ENCODE measurements at regions of chr1 and their contacts with region 1.

Region 1: GRCh38 chr1:157369808-157370521 is 182.3 kb downstream of the FCRL5 start:
- DNase-seq: peak; percentile 80
- H3K4me3 Mint-ChIP-seq: no peak overlapping the region
- H3K27ac Mint-ChIP-seq: no peak overlapping the region
- H3K4me1 Mint-ChIP-seq: peaks cover 4% of the 10 kb centered on the region
- H3K27me3 Mint-ChIP-seq: peaks cover 16% of the 10 kb centered on the region
- CTCF ChIP-seq: peak; percentile 99

Region 2: GRCh38 chr1:157380523-157380922 is 10.6 kb after region 1 on chr1:
- CTCF ChIA-PET with region 1: interaction called, 35 read pairs
- POLR2A ChIA-PET with region 1: no interaction called
- intact Hi-C with region 1: no loop called
- DNase-seq: no peak
- H3K4me3 Mint-ChIP-seq: no peak overlapping the region
- H3K27ac Mint-ChIP-seq: no peak overlapping the region
- H3K4me1 Mint-ChIP-seq: peaks cover 6% of the 10 kb centered on the region
- H3K27me3 Mint-ChIP-seq: no peaks in the 10 kb centered on the region
- CTCF ChIP-seq: no peak

Region 3: GRCh38 chr1:157403203-157403602 is 33.2 kb after region 1 on chr1:
- CTCF ChIA-PET with region 1: interaction called, 10 read pairs
- POLR2A ChIA-PET with region 1: no interaction called
- intact Hi-C with region 1: no loop called
- DNase-seq: peak; percentile 59
- H3K4me3 Mint-ChIP-seq: no peak overlapping the region
- H3K27ac Mint-ChIP-seq: no peak overlapping the region
- H3K4me1 Mint-ChIP-seq: peaks cover 29% of the 10 kb centered on the region
- H3K27me3 Mint-ChIP-seq: no peaks in the 10 kb centered on the region
- CTCF ChIP-seq: no peak

Region 4: DNA sequence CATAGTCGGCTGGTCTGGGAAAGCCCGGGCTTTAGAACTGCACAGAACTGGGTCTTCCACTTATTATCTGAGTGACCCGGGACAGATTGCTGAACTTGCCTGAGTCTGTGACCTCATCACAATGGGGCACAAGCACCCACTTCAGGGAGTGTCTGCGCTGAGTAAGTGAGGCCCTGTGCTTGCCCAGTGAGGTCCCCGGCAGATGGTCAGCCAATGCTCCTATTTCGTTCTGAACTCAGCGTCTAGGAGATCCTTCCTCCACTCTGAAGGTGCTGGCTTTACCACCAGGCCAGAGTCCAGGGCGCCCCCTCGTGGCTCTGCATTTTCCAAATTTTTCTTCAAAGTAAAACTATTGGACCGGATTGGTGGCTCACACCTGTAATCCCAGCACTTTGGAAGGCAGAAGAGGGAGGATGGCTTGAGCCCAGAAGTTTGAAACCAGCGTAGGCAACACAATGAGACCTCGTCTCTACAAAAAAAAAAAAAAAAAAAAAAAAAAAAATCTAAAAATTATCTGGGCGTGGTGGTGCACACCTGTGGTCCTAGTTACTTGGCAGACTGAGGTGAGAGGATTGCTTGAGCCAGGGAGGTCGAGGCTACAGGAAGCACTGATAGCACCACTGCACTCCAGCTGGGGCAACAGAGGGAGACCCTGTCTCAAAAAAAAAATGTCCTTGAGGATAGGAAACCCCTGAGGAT is 120.7 kb after region 1 on chr1:
- CTCF ChIA-PET with region 1: interaction called, 123 read pairs
- POLR2A ChIA-PET with region 1: interaction called, 3 read pairs
- intact Hi-C with region 1: loop called (anchors 1 kb)
- DNase-seq: peak; percentile 80
- H3K4me3 Mint-ChIP-seq: no peak overlapping the region
- H3K27ac Mint-ChIP-seq: no peak overlapping the region
- H3K4me1 Mint-ChIP-seq: peaks cover 5% of the 10 kb centered on the region
- H3K27me3 Mint-ChIP-seq: peaks cover 44% of the 10 kb centered on the region
- CTCF ChIP-seq: peak; percentile 82

Region 5: DNA sequence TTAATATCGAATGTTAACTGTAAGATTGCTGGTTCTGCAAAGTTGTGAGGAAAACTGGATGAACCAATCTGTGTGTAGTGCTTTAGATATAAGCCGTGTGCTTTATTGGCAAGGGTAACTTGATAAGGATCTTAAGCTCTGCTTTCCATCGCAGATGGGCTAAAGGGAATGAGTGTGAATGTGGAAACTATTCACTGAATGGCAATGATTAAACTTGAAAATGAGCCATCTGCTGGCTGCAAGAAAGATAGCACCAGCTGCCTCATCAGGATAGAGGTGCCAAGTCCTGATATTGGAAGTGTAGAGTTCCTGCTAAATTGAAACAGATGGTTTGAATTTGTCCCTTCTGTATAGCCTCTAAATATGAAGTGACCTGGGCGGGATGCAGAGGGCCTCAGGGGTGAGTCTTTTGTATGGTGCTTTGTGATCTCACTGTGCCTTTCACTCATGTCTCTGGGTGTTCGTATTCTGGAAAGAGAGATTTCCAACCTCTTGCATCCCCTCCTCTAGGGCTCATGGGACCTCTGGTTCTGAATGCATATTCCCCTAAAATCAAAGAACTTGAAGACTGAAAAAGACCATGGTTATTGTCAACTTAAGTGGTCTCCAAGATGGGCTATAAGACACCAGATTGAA is 321.4 kb after region 1 on chr1:
- CTCF ChIA-PET with region 1: interaction called, 20 read pairs
- POLR2A ChIA-PET with region 1: no interaction called
- intact Hi-C with region 1: loop called (anchors 5 kb)
- DNase-seq: peak; percentile 58
- H3K4me3 Mint-ChIP-seq: no peak overlapping the region
- H3K27ac Mint-ChIP-seq: no peak overlapping the region
- H3K4me1 Mint-ChIP-seq: no peaks in the 10 kb centered on the region
- H3K27me3 Mint-ChIP-seq: peaks cover 48% of the 10 kb centered on the region
- CTCF ChIP-seq: peak; percentile 62

Region 6: GRCh38 chr1:157948312-157949073 is 578.5 kb after region 1 on chr1:
- CTCF ChIA-PET with region 1: no interaction called
- POLR2A ChIA-PET with region 1: no interaction called
- intact Hi-C with region 1: loop called (anchors 10 kb)
- DNase-seq: peak; percentile 65
- H3K4me3 Mint-ChIP-seq: no peak overlapping the region
- H3K27ac Mint-ChIP-seq: no peak overlapping the region
- H3K4me1 Mint-ChIP-seq: no peaks in the 10 kb centered on the region
- H3K27me3 Mint-ChIP-seq: peaks cover 84% of the 10 kb centered on the region
- CTCF ChIP-seq: peak; percentile 88

Measured in MCF 10A (cell line).